Activated naive CD4-positive, alpha-beta T cell treated with anti-CD3 and anti-CD28 coated beads for 36 hours (primary cell): ENCODE measurements at regions of chr4 and their contacts with region 1.

Region 1: GRCh38 chr4:23333946-23334878 is 555.6 kb downstream of the PPARGC1A start:
- DNase-seq: peak; percentile 69
- H3K4me3 Mint-ChIP-seq: peak overlapping the region; percentile 45
- H3K27ac Mint-ChIP-seq: peak overlapping the region; percentile 98
- H3K4me1 Mint-ChIP-seq: peaks cover 38% of the 10 kb centered on the region
- H3K27me3 Mint-ChIP-seq: no peaks in the 10 kb centered on the region

Region 2: GRCh38 chr4:22458098-22458497 is 876.1 kb before region 1 on chr4:
- CTCF ChIA-PET with region 1: no interaction called
- intact Hi-C with region 1: no loop called
- DNase-seq: no peak
- H3K4me3 Mint-ChIP-seq: no peak overlapping the region
- H3K27ac Mint-ChIP-seq: no peak overlapping the region
- H3K4me1 Mint-ChIP-seq: peaks cover 3% of the 10 kb centered on the region
- H3K27me3 Mint-ChIP-seq: no peaks in the 10 kb centered on the region

Region 3: GRCh38 chr4:22678940-22679854 is 655.0 kb before region 1 on chr4:
- CTCF ChIA-PET with region 1: no interaction called
- intact Hi-C with region 1: loop called (anchors 10 kb)
- DNase-seq: no peak
- H3K4me3 Mint-ChIP-seq: no peak overlapping the region
- H3K27ac Mint-ChIP-seq: no peak overlapping the region
- H3K4me1 Mint-ChIP-seq: peaks cover 51% of the 10 kb centered on the region
- H3K27me3 Mint-ChIP-seq: no peaks in the 10 kb centered on the region

Region 4: DNA sequence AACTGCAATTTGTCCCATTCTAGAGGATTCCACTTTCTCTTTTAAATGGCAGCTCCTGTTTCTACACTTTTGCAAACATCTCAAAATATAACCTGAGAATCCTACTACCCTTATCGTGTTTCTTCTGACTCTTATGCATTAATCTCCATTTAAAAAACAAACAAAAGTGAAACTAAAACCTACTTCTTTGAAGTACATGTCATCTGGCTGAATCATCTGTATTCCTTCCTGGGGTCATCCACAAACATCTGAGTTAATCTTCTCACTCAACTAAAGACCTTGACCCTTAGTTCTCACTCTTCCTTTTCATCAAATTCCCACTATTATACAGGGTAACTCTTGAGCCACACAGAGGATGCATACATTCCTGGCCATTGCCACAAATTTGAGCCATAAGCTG is 29.2 kb before region 1 on chr4:
- CTCF ChIA-PET with region 1: interaction called, 5 read pairs
- intact Hi-C with region 1: loop called (anchors 2 kb)
- DNase-seq: no peak
- H3K4me3 Mint-ChIP-seq: no peak overlapping the region
- H3K27ac Mint-ChIP-seq: no peak overlapping the region
- H3K4me1 Mint-ChIP-seq: peaks cover 7% of the 10 kb centered on the region
- H3K27me3 Mint-ChIP-seq: no peaks in the 10 kb centered on the region

Region 5: DNA sequence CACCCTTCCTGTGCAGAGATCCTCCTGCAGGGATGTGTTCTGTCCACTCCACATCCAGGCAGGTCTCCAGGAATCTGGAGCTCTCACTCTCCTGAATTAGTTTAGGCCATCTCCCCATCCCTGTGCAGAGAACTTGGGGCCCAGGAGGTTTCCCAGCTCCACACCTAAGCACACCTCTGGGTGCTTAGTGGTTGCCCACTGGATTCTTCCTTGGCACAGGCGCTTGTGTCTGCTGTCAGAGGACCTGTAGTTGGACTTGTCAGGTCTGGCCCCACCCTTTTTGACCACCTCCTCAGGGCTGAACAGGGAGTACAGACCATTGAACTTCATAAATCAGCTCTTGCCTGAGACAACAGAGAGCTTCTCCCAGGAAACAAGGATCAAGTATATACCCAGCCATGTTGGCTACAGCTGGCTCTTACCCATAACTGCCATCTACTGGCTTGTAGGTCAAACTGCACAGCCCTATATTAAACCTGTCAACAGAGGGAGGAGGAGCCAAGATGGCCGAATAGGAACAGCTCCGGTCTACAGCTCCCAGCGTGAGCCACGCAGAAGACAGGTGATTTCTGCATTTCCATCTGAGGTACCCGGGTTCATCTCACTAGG is 280.2 kb after region 1 on chr4:
- CTCF ChIA-PET with region 1: no interaction called
- intact Hi-C with region 1: loop called (anchors 5 kb)
- DNase-seq: no peak
- H3K4me3 Mint-ChIP-seq: no peak overlapping the region
- H3K27ac Mint-ChIP-seq: no peak overlapping the region
- H3K4me1 Mint-ChIP-seq: no peaks in the 10 kb centered on the region
- H3K27me3 Mint-ChIP-seq: no peaks in the 10 kb centered on the region

Region 6: GRCh38 chr4:23737571-23737970 is 403.4 kb after region 1 on chr4:
- CTCF ChIA-PET with region 1: no interaction called
- intact Hi-C with region 1: no loop called
- DNase-seq: no peak
- H3K4me3 Mint-ChIP-seq: no peak overlapping the region
- H3K27ac Mint-ChIP-seq: no peak overlapping the region
- H3K4me1 Mint-ChIP-seq: no peaks in the 10 kb centered on the region
- H3K27me3 Mint-ChIP-seq: peaks cover 2% of the 10 kb centered on the region

Region 7: DNA sequence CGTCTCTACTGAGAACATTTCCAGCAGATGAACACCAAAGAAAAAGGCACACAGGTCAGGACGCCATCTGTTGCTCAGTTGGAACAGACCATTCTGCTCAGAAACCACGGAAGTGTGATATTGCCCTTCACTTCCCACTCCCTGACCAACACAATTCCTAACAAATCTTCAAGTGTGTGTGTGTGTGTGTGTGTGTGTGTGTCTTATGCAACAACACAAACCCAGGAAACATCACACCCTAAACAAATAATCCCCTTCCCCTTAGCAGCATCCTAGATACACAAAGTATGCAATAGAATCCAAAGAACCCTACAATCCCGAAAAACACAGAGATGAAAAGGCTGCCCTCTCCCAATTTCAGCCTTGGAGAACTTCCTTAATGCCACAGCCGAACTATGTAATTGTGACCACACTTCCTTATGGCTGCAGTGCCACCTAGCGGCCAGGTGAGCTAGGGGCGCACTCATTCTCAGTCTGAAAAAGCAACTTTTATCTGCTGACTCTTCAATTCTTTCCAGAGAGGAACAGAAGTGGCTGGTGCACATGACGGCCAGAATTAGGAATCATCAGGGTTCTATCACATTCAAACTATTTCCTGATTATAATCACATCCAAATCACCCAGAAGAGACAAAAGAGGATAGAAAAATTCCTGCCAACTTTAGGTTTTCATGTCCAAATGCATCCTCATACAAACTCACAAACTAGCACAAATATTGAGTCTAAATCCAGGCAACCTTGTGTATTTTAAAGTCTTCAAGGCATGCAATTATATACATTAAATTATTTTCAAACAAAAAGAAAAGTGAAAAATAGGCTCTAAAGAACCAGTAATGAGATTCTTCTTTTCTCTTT is 1085.2 kb after region 1 on chr4:
- CTCF ChIA-PET with region 1: interaction called, 3 read pairs
- intact Hi-C with region 1: loop called (anchors 1 kb)
- DNase-seq: peak; percentile 82
- H3K4me3 Mint-ChIP-seq: no peak overlapping the region
- H3K27ac Mint-ChIP-seq: no peak overlapping the region
- H3K4me1 Mint-ChIP-seq: peaks cover 3% of the 10 kb centered on the region
- H3K27me3 Mint-ChIP-seq: peaks cover 9% of the 10 kb centered on the region

Region 8: GRCh38 chr4:25159884-25160713 is 1825.9 kb after region 1 on chr4 and contains the start of gene SEPSECS:
- CTCF ChIA-PET with region 1: no interaction called
- intact Hi-C with region 1: loop called (anchors 1 kb)
- DNase-seq: peak; percentile 97
- H3K4me3 Mint-ChIP-seq: peak within 1 kb of the TSS; percentile 93
- H3K27ac Mint-ChIP-seq: peak within 1 kb of the TSS; percentile 99
- H3K4me1 Mint-ChIP-seq: peaks cover 34% of the 10 kb centered on the region
- H3K27me3 Mint-ChIP-seq: no peaks in the 10 kb centered on the region
- total RNA-seq, gene SEPSECS: 14.7 to 17.9 TPM